ENCODE measurements at regions of chr2 and their contacts with region 1.

Region 1: GRCh38 chr2:47339745-47340541 is 63.0 kb upstream of the MSH2 start:
- DNase-seq: no peak
- H3K4me3 ChIP-seq: no peak overlapping the region
- H3K27ac ChIP-seq: no peak overlapping the region
- H3K4me1 ChIP-seq: peaks cover 6 to 16% (median 7%) of the 10 kb centered on the region in 4 donors
- H3K27me3 ChIP-seq: no peaks in the 10 kb centered on the region
- CTCF ChIP-seq: no peak
- EP300 ChIP-seq: no peak
- POLR2A ChIP-seq: no peak

Region 2: DNA sequence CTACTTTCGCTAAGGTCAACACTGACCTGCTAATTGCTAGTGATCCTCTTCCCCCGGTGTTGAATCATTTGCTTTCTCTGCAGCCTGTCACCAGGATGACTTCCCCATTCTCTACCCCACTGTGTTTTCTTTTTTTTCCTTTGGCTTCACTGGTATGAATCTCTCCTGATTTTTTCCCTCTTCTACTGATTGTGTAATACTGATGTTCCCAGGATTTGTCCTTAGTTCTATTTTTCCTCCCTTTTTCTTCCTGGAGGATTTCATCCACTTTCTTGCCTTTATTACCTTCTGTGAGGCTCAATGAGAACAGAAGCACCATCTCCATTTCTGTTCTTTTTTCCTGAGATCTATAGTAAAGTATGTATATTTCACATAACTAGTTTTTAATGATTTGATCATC is 48.9 kb after region 1 on chr2:
- intact Hi-C with region 1: loop called (anchors 1 kb)
- DNase-seq: no peak
- H3K4me3 ChIP-seq: no peak overlapping the region
- H3K27ac ChIP-seq: no peak overlapping the region
- H3K4me1 ChIP-seq: no peaks in the 10 kb centered on the region
- H3K27me3 ChIP-seq: no peaks in the 10 kb centered on the region
- CTCF ChIP-seq: no peak
- EP300 ChIP-seq: no peak
- POLR2A ChIP-seq: no peak

Region 3: DNA sequence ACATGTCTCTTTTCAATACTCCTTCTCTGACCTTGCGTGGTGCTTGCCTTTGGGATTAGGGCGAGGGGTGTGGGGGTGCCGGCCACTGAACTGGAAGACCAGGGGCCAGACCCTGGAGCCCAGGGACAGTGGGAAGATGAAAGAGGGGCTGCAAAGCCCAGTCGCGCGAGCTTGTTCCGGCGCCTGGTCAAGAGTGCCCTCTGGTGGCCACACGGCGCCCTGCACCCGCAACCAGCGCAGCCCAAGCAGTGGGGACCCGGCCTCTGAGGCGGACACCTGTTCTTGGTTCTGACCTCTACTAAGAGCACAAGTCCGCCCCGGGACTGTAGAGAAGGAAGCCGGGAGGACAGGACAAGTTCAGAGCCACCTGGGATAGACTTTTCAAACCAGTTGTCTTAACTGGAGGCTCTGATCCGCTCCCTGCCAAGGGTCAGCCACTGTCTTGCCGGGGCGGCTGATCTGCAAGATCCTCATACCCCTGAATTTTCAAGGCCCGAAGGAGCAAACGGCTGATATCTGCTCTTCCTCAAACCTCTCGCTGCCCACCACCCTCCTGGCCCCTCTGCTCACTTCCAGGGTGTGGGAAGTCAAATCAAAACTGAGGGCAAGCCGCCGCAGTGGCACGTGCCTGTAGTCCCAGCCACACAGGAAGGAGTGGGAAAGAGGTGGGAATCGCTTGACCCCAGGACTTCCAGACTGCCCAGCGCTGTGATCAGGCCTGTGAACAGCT is 428.1 kb after region 1 on chr2:
- intact Hi-C with region 1: loop called (anchors 10 kb)
- DNase-seq: peak; percentile 92
- H3K4me3 ChIP-seq: peak overlapping the region in 2 of 4 donors; percentile 22 to 34
- H3K27ac ChIP-seq: no peak overlapping the region
- H3K4me1 ChIP-seq: peaks cover 0 to 7% (median 7%) of the 10 kb centered on the region in 4 donors
- H3K27me3 ChIP-seq: peaks cover 0 to 7% (median 0%) of the 10 kb centered on the region in 4 donors
- CTCF ChIP-seq: peak; percentile 94 to 100 (median 99)
- EP300 ChIP-seq: no peak
- POLR2A ChIP-seq: no peak

Measured in esophagus muscularis mucosa (tissue), 4 donors.